Activated CD4-positive, alpha-beta memory T cell treated with anti-CD3 and anti-CD28 coated beads for 36 hours (primary cell): ENCODE measurements at regions of chr11 and their contacts with region 1.

Region 1: DNA sequence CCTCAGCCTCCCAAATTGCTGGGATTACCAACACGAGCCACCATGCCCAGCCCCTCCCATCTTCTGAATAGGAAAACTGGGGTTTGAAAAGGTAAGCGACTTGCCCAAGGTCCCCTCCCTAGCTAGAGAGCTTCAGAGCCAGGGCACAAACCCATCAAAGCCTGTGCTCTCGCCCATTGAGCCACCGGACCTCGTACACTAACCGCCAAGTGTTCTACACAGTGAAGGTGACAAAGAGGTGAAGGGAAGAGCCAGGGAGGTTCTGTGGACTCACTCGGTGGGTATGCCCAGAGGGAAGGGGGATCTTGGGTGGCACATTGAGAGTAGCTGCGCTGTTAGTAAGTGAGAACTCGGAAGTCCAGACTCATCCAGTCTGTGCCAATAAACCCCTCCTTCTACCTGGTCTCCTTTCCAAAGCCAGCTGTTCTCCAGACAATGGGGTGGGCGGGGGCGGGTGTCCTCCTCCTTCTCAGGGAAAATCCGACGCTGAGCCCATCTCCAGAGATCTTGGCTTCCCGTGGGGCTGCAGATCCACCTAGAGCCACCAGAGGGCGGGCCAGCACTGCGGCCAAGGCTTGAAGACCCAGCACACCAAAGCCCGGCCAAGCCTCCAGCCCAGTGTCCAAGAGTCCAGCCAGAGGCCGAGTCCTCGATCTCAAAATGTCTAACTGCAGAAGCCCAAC is 3.2 kb upstream of the RTN4RL2 start:
- DNase-seq: peak; percentile 84
- H3K4me3 Mint-ChIP-seq: peak overlapping the region; percentile 51
- H3K27ac Mint-ChIP-seq: no peak overlapping the region
- H3K4me1 Mint-ChIP-seq: peaks cover 25% of the 10 kb centered on the region
- H3K27me3 Mint-ChIP-seq: peaks cover 36% of the 10 kb centered on the region

Region 2: GRCh38 chr11:56720513-56720912 is 736.6 kb before region 1 on chr11:
- CTCF ChIA-PET with region 1: no interaction called
- POLR2A ChIA-PET with region 1: no interaction called
- intact Hi-C with region 1: no loop called
- DNase-seq: no peak
- H3K4me3 Mint-ChIP-seq: no peak overlapping the region
- H3K27ac Mint-ChIP-seq: no peak overlapping the region
- H3K4me1 Mint-ChIP-seq: no peaks in the 10 kb centered on the region
- H3K27me3 Mint-ChIP-seq: no peaks in the 10 kb centered on the region

Region 3: GRCh38 chr11:57359896-57360690 is 97.0 kb before region 1 on chr11:
- CTCF ChIA-PET with region 1: interaction called, 11 read pairs
- POLR2A ChIA-PET with region 1: no interaction called
- intact Hi-C with region 1: no loop called
- DNase-seq: no peak
- H3K4me3 Mint-ChIP-seq: no peak overlapping the region
- H3K27ac Mint-ChIP-seq: no peak overlapping the region
- H3K4me1 Mint-ChIP-seq: no peaks in the 10 kb centered on the region
- H3K27me3 Mint-ChIP-seq: peaks cover 11% of the 10 kb centered on the region

Region 4: GRCh38 chr11:57440744-57441414 is 16.2 kb before region 1 on chr11:
- CTCF ChIA-PET with region 1: interaction called, 19 read pairs
- POLR2A ChIA-PET with region 1: no interaction called
- intact Hi-C with region 1: no loop called
- DNase-seq: no peak
- H3K4me3 Mint-ChIP-seq: no peak overlapping the region
- H3K27ac Mint-ChIP-seq: no peak overlapping the region
- H3K4me1 Mint-ChIP-seq: no peaks in the 10 kb centered on the region
- H3K27me3 Mint-ChIP-seq: no peaks in the 10 kb centered on the region

Region 5: GRCh38 chr11:57474017-57474802 is 17.1 kb after region 1 on chr11:
- CTCF ChIA-PET with region 1: interaction called, 185 read pairs
- POLR2A ChIA-PET with region 1: interaction called, 3 read pairs
- intact Hi-C with region 1: no loop called
- DNase-seq: peak; percentile 53
- H3K4me3 Mint-ChIP-seq: no peak overlapping the region
- H3K27ac Mint-ChIP-seq: peak overlapping the region; percentile 20
- H3K4me1 Mint-ChIP-seq: peaks cover 22% of the 10 kb centered on the region
- H3K27me3 Mint-ChIP-seq: peaks cover 11% of the 10 kb centered on the region

Region 6: DNA sequence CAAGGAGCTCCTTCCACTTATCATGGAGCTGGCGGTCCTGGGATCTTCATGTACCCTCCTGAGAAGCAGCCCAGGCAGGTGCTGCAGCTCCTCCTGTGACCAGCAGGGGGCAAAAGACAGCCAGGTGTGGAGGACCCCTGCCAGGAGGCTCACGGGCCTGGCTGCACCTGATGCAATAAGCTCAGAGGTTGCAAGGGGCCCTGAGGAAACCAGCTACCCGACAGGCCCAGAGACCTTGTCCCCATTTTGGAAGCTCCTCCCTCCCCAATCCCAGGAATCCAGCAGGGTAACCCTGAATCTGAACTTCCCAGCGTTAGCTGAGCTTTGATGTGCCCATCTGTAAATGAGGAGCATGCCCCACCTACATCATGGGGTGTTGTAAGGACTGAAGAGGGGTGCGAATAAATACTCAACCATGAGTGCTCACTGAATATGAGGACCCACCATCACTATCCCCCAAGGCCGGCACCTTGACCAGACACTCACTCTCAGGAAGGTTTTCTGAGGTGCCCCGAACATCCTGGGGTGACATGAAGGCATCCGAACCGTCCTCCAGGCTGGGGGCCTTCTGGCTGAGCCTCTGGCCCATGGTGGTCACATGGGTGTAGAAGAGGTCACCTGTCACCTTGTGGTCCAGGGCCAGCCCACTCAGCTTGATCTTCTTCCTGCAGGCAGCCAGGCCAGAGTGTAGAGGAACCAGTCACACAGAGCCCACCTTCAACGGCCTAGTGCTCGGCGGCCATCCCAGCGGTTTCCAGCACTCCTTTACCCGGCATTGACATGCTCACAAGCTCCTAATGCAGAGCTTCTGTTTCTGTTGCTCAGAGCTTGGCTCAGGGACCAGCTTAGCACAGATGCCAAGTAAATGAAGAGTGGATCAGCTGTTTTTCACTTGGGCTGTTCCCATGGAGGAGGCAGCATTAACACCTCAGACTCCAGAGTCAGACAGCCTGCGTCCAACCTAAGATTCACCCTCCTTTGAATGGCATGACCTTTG is 36.7 kb after region 1 on chr11:
- CTCF ChIA-PET with region 1: interaction called, 65 read pairs
- POLR2A ChIA-PET with region 1: no interaction called
- intact Hi-C with region 1: loop called (anchors 5 kb)
- DNase-seq: peak; percentile 87
- H3K4me3 Mint-ChIP-seq: no peak overlapping the region
- H3K27ac Mint-ChIP-seq: peak overlapping the region; percentile 83
- H3K4me1 Mint-ChIP-seq: peaks cover 9% of the 10 kb centered on the region
- H3K27me3 Mint-ChIP-seq: no peaks in the 10 kb centered on the region

Region 7: DNA sequence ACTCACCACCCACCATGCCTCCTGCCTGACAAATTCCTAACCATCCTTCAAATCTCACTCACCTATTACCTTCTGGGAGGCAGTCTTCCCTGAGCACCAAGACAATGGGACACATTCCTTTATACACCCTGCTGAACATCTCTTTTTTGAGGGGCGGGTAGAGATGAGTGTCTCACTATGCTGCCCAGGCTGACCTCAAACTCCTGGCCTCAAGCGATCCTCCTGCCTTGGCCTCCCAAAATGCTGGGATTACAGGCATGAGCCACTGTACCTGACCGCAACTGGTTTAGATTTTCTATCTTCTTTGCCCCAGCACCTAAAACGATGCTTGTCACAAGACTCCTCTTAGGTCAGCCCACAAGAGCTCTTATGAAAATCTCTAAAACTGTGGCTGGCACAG is 66.3 kb after region 1 on chr11:
- CTCF ChIA-PET with region 1: interaction called, 114 read pairs
- POLR2A ChIA-PET with region 1: no interaction called
- intact Hi-C with region 1: loop called (anchors 1 kb)
- DNase-seq: no peak
- H3K4me3 Mint-ChIP-seq: no peak overlapping the region
- H3K27ac Mint-ChIP-seq: no peak overlapping the region
- H3K4me1 Mint-ChIP-seq: peaks cover 11% of the 10 kb centered on the region
- H3K27me3 Mint-ChIP-seq: no peaks in the 10 kb centered on the region

Region 8: GRCh38 chr11:57644748-57645688 is 187.9 kb after region 1 on chr11:
- CTCF ChIA-PET with region 1: interaction called, 69 read pairs
- POLR2A ChIA-PET with region 1: no interaction called
- intact Hi-C with region 1: loop called (anchors 2 kb)
- DNase-seq: peak; percentile 90
- H3K4me3 Mint-ChIP-seq: no peak overlapping the region
- H3K27ac Mint-ChIP-seq: no peak overlapping the region
- H3K4me1 Mint-ChIP-seq: peaks cover 36% of the 10 kb centered on the region
- H3K27me3 Mint-ChIP-seq: peaks cover 42% of the 10 kb centered on the region